IMR-90 (cell line): ENCODE measurements at regions of chr17 and their contacts with region 1.

Region 1: GRCh38 chr17:82781894-82782274 is 30.0 kb downstream of the TBCD start:
- DNase-seq: peak; percentile 71
- ATAC-seq: peak; percentile 100
- H3K4me3 ChIP-seq: no peak overlapping the region
- H3K27ac ChIP-seq: no peak overlapping the region
- H3K4me1 ChIP-seq: peaks cover 4% of the 10 kb centered on the region; the same call in 1 of the 2 replicates
- H3K27me3 ChIP-seq: no peaks in the 10 kb centered on the region
- CTCF ChIP-seq: peak; percentile 98
- POLR2A ChIP-seq: peak; percentile 56; the same call in 1 of the 2 replicates
- RAD21 ChIP-seq: peak; percentile 99

Region 2: DNA sequence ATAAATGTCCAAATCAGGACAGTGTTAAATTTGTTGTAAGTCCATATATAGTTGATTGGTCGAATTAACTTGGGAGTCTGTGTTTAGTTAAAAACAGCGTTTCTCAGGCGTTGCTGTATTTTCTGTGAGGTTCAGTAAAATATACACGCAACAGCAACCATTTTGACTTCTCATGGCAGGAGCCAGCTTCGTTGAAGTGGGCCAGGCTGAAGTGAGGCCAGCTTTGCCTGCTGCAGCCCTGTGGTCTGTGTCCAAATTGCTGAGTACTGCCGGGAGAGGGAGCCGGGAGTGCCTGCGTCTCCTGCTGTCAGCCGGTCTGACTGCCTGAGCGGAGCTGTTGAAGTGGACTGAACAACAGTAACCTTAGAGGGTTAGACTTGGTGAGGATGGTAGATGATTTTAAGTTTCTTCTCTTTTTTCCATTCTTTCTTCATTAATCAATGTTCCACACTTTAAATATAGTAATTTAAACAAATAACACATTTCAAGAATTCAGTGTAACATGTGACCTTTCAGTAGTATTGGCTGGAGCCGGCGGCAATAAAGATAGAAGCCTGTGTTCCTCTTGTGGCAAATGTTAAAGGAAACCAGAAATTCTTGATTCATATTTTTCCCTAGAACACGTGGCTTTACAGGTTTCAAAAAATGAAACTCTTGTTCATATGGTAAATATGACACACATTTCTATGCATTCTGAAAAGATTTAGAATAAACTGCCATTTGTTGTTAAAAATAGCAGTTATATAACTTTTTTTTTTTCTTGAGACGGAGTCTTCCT is 94.9 kb after region 1 on chr17:
- CTCF ChIA-PET with region 1: no interaction called
- POLR2A ChIA-PET with region 1: no interaction called
- dilution Hi-C with region 1: no loop called
- in situ Hi-C with region 1: no loop called
- intact Hi-C with region 1: loop called (anchors 5 kb)
- DNase-seq: peak; percentile 78
- ATAC-seq: peak; percentile 98
- H3K4me3 ChIP-seq: no peak overlapping the region
- H3K27ac ChIP-seq: no peak overlapping the region
- H3K4me1 ChIP-seq: peaks cover 5% of the 10 kb centered on the region; the same call in 1 of the 2 replicates
- H3K27me3 ChIP-seq: no peaks in the 10 kb centered on the region
- CTCF ChIP-seq: peak; percentile 59
- POLR2A ChIP-seq: no peak
- RAD21 ChIP-seq: peak; percentile 63

Region 3: GRCh38 chr17:82888691-82889495 is 107.0 kb after region 1 on chr17:
- CTCF ChIA-PET with region 1: no interaction called
- POLR2A ChIA-PET with region 1: no interaction called
- dilution Hi-C with region 1: no loop called
- in situ Hi-C with region 1: no loop called
- intact Hi-C with region 1: no loop called
- DNase-seq: no peak
- ATAC-seq: no peak
- H3K4me3 ChIP-seq: no peak overlapping the region
- H3K27ac ChIP-seq: no peak overlapping the region
- H3K4me1 ChIP-seq: peaks cover 17% of the 10 kb centered on the region
- H3K27me3 ChIP-seq: no peaks in the 10 kb centered on the region
- CTCF ChIP-seq: no peak
- POLR2A ChIP-seq: no peak
- RAD21 ChIP-seq: no peak

Region 4: DNA sequence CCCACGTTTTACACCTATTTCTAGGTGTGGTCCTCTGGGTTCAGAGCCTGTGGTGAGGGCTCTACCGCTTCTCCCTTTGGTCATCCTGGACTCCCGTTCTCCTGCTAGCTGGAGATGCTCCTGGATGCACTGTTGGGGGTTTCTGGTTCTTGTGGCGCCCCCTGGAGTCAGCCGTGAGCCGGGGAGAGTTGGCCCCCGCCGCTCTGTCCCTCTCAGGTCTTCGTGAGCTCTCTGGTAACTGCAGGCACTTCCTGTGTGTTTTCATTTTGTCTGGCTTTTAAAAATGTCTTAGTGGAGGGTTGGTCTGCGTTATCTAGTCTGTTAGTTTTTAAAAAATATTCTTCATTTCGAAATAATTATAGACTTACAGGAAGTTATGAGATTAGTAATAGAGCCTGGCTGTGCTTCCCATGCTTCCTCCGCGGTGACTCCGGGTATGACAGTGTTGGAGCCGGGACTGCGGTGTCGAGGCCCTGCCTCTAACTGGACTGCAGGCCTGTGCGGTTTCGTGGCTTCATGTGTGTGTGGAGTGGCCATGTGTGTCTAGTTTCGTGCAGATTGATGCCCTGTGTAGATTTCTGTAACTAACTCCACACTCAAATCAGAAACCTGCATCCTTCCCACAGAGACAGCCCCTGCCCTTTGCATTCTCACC is 135.9 kb after region 1 on chr17:
- CTCF ChIA-PET with region 1: interaction called, 4 read pairs
- POLR2A ChIA-PET with region 1: no interaction called
- dilution Hi-C with region 1: no loop called
- in situ Hi-C with region 1: no loop called
- intact Hi-C with region 1: loop called (anchors 2 kb)
- DNase-seq: peak; percentile 23
- ATAC-seq: no peak; the same call in 1 of the 2 replicates
- H3K4me3 ChIP-seq: no peak overlapping the region
- H3K27ac ChIP-seq: no peak overlapping the region
- H3K4me1 ChIP-seq: no peaks in the 10 kb centered on the region
- H3K27me3 ChIP-seq: no peaks in the 10 kb centered on the region
- CTCF ChIP-seq: peak; percentile 36; the same call in 1 of the 2 replicates
- POLR2A ChIP-seq: no peak
- RAD21 ChIP-seq: peak; percentile 48

Region 5: DNA sequence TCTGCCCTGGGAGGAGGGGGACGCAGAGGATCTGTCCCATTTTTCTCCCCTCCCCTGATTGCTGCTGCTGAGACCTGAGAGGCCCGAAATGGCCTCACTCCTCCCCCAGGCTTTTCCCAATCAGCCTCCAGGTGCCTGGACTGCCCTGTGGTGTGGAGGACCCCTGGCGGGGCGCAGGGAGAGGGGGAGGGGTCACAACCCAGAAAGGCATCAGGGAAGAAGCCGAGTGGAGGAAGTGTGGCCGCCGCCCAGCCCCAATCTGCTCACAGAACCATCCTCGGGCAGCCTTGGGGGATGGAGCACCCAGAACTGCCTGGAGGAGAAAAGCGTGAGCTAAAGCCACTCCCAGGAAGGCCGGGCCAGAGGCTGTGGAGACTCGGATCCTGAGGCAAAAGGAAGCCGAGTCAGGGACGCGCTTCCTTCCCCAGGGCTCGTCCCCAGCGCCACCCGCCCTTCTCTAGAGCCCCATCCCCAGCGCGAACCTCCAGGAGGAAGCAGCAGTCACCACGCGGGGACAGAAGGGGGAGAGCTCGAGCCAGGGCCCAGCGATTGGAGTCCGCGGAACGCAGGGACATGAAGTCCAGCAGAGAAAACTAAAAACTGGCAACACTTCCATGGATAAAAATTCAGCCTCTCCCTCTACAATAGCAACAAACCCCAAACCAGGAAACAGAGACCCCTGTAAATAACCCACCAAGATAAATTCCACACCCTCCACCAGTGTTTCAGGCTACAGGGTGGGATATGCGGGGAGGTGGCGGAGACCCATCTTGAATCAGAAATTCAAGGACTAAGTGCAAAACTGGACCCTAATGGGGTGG is 181.2 kb after region 1 on chr17:
- CTCF ChIA-PET with region 1: no interaction called
- POLR2A ChIA-PET with region 1: no interaction called
- dilution Hi-C with region 1: no loop called
- in situ Hi-C with region 1: no loop called
- intact Hi-C with region 1: loop called (anchors 1 kb)
- DNase-seq: peak; percentile 77
- ATAC-seq: peak; percentile 96
- H3K4me3 ChIP-seq: no peak overlapping the region
- H3K27ac ChIP-seq: no peak overlapping the region
- H3K4me1 ChIP-seq: peaks cover 4% of the 10 kb centered on the region
- H3K27me3 ChIP-seq: no peaks in the 10 kb centered on the region
- CTCF ChIP-seq: peak; percentile 95
- POLR2A ChIP-seq: no peak
- RAD21 ChIP-seq: peak; percentile 92

Region 6: DNA sequence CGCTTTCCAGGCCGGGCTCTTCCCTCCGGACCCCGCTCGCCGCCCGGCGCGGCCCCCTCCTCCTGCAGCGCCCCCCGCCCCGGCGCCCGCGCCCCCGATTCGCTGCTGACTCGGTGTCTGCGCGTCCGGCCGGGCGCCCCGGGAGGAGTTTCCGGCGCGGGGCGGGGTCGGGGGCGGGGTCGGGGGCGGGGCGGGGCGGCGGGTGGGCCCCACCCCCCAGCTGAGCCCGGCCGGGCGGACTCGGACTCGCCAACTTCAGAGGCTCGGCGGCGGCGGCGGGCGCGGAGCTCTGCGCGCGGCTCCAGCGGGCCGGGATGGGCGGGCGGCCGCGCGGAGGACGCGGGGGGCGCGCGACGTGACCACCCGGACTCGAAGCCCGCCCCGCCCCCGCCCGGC is 297.5 kb after region 1 on chr17 and contains the start of gene METRNL:
- CTCF ChIA-PET with region 1: no interaction called
- POLR2A ChIA-PET with region 1: no interaction called
- dilution Hi-C with region 1: no loop called
- in situ Hi-C with region 1: no loop called
- intact Hi-C with region 1: loop called (anchors 1 kb)
- DNase-seq: peak; percentile 50
- ATAC-seq: peak; percentile 63
- H3K4me3 ChIP-seq: peak within 1 kb of the TSS; percentile 67
- H3K27ac ChIP-seq: peak within 1 kb of the TSS; percentile 49
- H3K4me1 ChIP-seq: peaks cover 27% of the 10 kb centered on the region
- H3K27me3 ChIP-seq: peaks cover 9% of the 10 kb centered on the region; the same call in 1 of the 2 replicates
- CTCF ChIP-seq: no peak
- POLR2A ChIP-seq: peak; percentile 94
- RAD21 ChIP-seq: no peak
- total RNA-seq, gene METRNL: 17.9 and 21.4 TPM in 2 replicates